Activated naive CD4-positive, alpha-beta T cell treated with anti-CD3 and anti-CD28 coated beads for 36 hours (primary cell): ENCODE measurements at regions of chr1 and their contacts with region 1.

Region 1: DNA sequence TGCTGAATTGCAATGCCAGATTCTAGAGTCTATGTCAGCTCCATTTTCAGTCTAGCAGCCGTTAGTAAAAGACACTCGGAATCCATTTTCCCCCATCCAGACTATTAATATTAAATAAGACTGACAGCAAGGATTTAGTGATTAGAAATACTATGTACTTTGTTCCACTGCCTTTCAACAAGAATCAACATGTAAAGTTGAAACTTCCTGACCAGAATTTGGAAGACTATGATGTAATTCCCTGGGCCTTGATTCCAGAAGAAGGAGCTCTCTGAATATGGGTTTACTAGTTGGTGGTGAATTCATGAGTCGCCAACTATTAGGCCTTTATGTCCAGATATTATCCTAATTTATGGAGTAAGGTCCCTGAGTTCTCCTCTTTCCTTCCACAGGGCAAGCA is 24.8 kb downstream of the KDM1A start:
- DNase-seq: no peak
- H3K4me3 Mint-ChIP-seq: no peak overlapping the region
- H3K27ac Mint-ChIP-seq: no peak overlapping the region
- H3K4me1 Mint-ChIP-seq: peaks cover 35% of the 10 kb centered on the region
- H3K27me3 Mint-ChIP-seq: no peaks in the 10 kb centered on the region

Region 2: GRCh38 chr1:22611530-22611947 is 432.5 kb before region 1 on chr1:
- CTCF ChIA-PET with region 1: no interaction called
- intact Hi-C with region 1: no loop called
- DNase-seq: peak; percentile 63
- H3K4me3 Mint-ChIP-seq: no peak overlapping the region
- H3K27ac Mint-ChIP-seq: no peak overlapping the region
- H3K4me1 Mint-ChIP-seq: no peaks in the 10 kb centered on the region
- H3K27me3 Mint-ChIP-seq: peaks cover 40% of the 10 kb centered on the region

Region 3: GRCh38 chr1:22922640-22923039 is 121.4 kb before region 1 on chr1:
- CTCF ChIA-PET with region 1: no interaction called
- intact Hi-C with region 1: no loop called
- DNase-seq: no peak
- H3K4me3 Mint-ChIP-seq: no peak overlapping the region
- H3K27ac Mint-ChIP-seq: no peak overlapping the region
- H3K4me1 Mint-ChIP-seq: no peaks in the 10 kb centered on the region
- H3K27me3 Mint-ChIP-seq: peaks cover 8% of the 10 kb centered on the region

Region 4: DNA sequence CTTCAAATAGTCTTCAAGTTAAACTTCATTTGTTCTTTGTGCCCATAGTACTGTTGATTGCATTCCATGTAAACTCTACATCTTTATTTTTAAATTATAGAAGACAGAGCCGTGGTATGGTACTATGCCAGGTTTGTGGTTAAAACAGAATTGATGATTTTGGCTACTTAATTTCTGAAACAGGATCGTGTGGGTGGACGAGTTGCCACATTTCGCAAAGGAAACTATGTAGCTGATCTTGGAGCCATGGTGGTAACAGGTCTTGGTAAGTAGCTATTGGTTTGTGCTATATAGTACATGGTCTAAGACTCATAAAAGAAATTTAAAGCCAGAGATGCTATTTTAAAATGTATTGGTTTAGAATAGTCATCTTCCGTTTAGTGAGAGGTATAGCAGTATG is 13.3 kb after region 1 on chr1:
- CTCF ChIA-PET with region 1: interaction called, 11 read pairs
- intact Hi-C with region 1: no loop called
- DNase-seq: no peak
- H3K4me3 Mint-ChIP-seq: no peak overlapping the region
- H3K27ac Mint-ChIP-seq: no peak overlapping the region
- H3K4me1 Mint-ChIP-seq: no peaks in the 10 kb centered on the region
- H3K27me3 Mint-ChIP-seq: no peaks in the 10 kb centered on the region